ENCODE measurements at regions of chr1 and their contacts with region 1.

Region 1: DNA sequence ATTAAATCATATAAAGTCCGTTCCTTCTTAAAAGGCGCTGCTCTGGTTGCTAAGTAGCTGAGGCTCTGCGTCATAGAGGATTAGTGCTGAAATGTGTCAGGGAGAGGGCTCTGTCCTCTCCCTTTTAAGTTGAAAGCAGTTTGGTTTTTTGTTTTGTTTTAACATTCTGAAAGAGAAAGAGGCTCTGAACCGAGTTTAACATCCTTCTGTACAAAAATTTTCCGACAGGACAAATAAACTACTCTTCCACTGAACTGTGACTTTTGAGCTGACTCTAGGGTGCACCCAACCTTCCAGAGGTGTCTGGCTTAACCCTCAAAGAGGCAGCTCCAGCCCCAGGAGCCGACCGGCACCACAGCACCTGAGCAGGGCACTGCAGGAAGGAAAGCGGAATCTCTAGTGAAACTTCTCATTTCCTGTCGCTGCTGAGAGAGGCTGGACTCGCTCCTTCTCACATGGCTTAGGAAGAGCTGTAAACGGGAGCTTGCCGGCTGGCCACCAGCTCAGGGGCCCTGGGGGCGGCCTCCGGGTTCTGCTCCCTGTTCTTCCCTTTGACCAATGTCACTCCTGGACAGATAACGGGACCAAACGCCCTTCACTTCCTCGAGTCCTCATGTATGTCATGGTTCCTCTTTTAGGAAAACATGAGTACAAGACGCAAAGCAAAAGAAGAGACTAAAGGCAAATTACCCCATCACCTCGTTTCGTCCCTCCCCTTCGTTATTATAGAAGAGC is 1.2 kb downstream of the VAV3 start:
- DNase-seq: peak; percentile 86
- H3K4me3 Mint-ChIP-seq: peak overlapping the region; percentile 91
- H3K27ac Mint-ChIP-seq: peak overlapping the region; percentile 92
- H3K4me1 Mint-ChIP-seq: peaks cover 23% of the 10 kb centered on the region
- H3K27me3 Mint-ChIP-seq: peaks cover 3% of the 10 kb centered on the region

Region 2: GRCh38 chr1:107820805-107821204 is 143.0 kb before region 1 on chr1:
- intact Hi-C with region 1: loop called (anchors 1 kb)
- DNase-seq: no peak
- H3K4me3 Mint-ChIP-seq: no peak overlapping the region
- H3K27ac Mint-ChIP-seq: peak overlapping the region; percentile 80
- H3K4me1 Mint-ChIP-seq: peaks cover 14% of the 10 kb centered on the region
- H3K27me3 Mint-ChIP-seq: no peaks in the 10 kb centered on the region

Region 3: GRCh38 chr1:107926436-107927080 is 37.2 kb before region 1 on chr1:
- intact Hi-C with region 1: no loop called
- DNase-seq: no peak
- H3K4me3 Mint-ChIP-seq: no peak overlapping the region
- H3K27ac Mint-ChIP-seq: no peak overlapping the region
- H3K4me1 Mint-ChIP-seq: peaks cover 9% of the 10 kb centered on the region
- H3K27me3 Mint-ChIP-seq: no peaks in the 10 kb centered on the region

Region 4: DNA sequence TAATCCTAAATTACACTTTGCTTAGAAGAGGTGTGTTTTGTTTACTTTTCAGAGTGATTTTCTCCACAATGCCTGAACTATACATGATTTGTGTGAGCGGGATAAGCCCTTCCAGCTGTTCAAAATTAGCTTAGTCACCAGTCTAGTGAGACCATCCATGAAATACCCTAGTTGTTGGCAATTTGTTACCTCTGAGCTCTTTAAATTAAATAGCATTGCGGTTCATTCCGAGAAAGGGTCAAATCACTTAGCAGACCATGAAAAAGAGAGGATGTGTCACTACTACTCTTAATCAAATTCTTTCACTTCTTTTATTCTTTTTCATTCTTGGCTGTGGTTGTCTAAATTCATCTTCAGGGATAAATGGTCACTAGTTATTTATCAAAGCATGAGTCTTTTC is 13.1 kb after region 1 on chr1:
- intact Hi-C with region 1: loop called (anchors 1 kb)
- DNase-seq: no peak
- H3K4me3 Mint-ChIP-seq: no peak overlapping the region
- H3K27ac Mint-ChIP-seq: no peak overlapping the region
- H3K4me1 Mint-ChIP-seq: peaks cover 4% of the 10 kb centered on the region
- H3K27me3 Mint-ChIP-seq: peaks cover 18% of the 10 kb centered on the region

Region 5: DNA sequence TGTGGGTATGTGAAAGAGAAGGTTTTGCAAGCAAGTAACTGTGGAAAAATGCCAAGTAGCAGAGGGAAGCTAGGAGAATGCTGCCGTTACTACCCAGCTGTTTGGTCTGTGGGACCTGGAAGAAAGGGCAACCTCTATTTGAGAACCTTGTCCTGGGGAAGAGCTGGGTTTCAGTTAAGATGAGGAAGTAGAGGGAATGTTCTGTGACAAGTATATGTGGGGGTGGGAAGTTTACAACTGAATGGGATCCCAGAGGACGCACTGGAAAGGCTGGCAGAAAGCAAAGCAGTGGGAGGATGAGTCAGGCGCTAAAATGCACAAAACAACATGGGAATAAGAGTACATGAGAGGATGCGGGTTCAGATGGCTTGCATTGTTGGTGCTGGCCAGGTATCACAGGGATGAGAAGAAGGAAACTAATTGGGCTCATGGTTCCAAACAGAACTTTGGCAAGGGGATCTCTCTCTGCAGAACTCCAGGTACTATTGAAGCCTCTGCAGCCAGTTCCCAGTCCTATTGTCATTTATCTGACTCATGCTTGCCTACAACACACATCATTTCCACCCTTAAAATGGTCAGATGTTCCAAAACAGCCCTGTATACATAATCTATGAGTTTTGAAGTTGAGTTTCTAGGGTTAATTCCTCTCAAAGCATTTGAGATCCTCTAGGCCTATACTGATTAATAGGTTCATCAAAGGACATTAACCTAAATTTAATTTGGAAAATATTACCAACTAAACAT is 89.7 kb after region 1 on chr1:
- intact Hi-C with region 1: loop called (anchors 2 kb)
- DNase-seq: no peak
- H3K4me3 Mint-ChIP-seq: no peak overlapping the region
- H3K27ac Mint-ChIP-seq: no peak overlapping the region
- H3K4me1 Mint-ChIP-seq: peaks cover 22% of the 10 kb centered on the region
- H3K27me3 Mint-ChIP-seq: no peaks in the 10 kb centered on the region

Region 6: GRCh38 chr1:108559215-108560186 is 595.7 kb after region 1 on chr1 and contains the start of gene EEIG2:
- intact Hi-C with region 1: loop called (anchors 10 kb)
- DNase-seq: peak; percentile 97
- H3K4me3 Mint-ChIP-seq: peak within 1 kb of the TSS; percentile 93
- H3K27ac Mint-ChIP-seq: peak within 1 kb of the TSS; percentile 90
- H3K4me1 Mint-ChIP-seq: peaks cover 30% of the 10 kb centered on the region
- H3K27me3 Mint-ChIP-seq: peaks cover 8% of the 10 kb centered on the region
- total RNA-seq, gene EEIG2: 13.4 and 14.0 TPM in 2 replicates

Measured in activated CD4-positive, alpha-beta T cell treated with anti-CD3 and anti-CD28 coated beads, Interleukin-2, amount 10 ng/mL, durations not matched to agents 24 days and 14 days (primary cell).